ENCODE measurements at regions of chr2 and their contacts with region 1.

Region 1: GRCh38 chr2:241686649-241687425 is at the start of gene DTYMK:
- DNase-seq: peak; percentile 99
- H3K4me3 Mint-ChIP-seq: peak within 1 kb of the TSS; percentile 90
- H3K27ac Mint-ChIP-seq: peak within 1 kb of the TSS; percentile 98
- H3K4me1 Mint-ChIP-seq: peaks cover 21% of the 10 kb centered on the region
- H3K27me3 Mint-ChIP-seq: no peaks in the 10 kb centered on the region
- total RNA-seq, gene DTYMK: 110 and 111 TPM in 2 replicates

Region 2: GRCh38 chr2:239814116-239814860 is 1872.5 kb before region 1 on chr2:
- intact Hi-C with region 1: no loop called
- DNase-seq: no peak
- H3K4me3 Mint-ChIP-seq: no peak overlapping the region
- H3K27ac Mint-ChIP-seq: no peak overlapping the region
- H3K4me1 Mint-ChIP-seq: no peaks in the 10 kb centered on the region
- H3K27me3 Mint-ChIP-seq: no peaks in the 10 kb centered on the region

Region 3: DNA sequence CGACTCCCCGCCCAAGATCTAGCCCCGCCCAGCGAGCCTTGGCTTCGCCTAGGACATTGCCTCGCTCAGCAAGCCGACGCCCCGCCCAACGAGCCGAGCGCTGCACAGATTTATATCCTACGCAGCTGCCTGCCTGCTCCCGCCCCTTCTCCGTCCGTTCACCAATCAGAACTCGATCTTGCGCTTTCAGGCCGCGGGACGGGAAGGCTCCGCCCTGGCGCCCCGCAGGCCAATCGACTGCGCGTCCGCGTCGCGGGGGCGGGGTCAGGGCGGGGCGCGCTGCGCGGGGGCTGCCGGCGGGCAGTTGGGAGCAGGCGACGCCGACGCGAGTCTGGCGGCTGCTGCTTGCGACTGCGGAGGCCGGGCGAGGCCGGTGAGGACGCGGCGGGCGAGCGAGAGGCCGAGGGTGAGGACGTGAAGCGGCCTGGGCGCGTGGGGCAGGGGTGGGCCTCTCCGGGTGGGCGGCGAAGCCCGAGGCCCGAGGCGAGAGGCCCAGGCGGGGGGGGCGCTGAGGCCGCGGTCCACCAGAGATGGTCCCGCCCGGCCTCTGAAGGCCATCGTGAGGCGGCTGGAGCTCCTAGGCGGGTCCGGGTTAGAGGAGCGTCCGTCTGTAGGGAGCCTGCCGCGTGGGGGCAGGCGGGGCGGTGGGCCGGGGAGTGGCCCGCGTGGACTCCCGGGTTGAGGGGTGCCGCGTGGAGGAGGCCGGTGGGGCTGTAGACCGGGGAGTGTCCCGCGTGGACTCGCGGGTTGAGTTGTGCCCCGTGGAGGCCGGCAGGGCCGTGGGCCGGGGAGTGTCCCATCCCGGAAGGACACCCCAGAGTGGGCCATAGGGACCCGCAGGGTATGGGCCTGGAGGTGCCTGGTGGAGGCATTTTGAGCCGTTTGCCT is 330.6 kb before region 1 on chr2 and contains the start of gene FARP2:
- intact Hi-C with region 1: loop called (anchors 5 kb)
- DNase-seq: peak; percentile 98
- H3K4me3 Mint-ChIP-seq: peak within 1 kb of the TSS; percentile 79
- H3K27ac Mint-ChIP-seq: peak within 1 kb of the TSS; percentile 76
- H3K4me1 Mint-ChIP-seq: peaks cover 33% of the 10 kb centered on the region
- H3K27me3 Mint-ChIP-seq: no peaks in the 10 kb centered on the region
- total RNA-seq, gene FARP2: 36.5 and 43.1 TPM in 2 replicates

Region 4: GRCh38 chr2:241637000-241637791 is 49.6 kb before region 1 on chr2 and contains the starts of genes ATG4B and THAP4:
- intact Hi-C with region 1: loop called (anchors 1 kb)
- DNase-seq: peak; percentile 95
- H3K4me3 Mint-ChIP-seq: peak within 1 kb of the TSS; percentile 89
- H3K27ac Mint-ChIP-seq: peak within 1 kb of the TSS; percentile 93
- H3K4me1 Mint-ChIP-seq: peaks cover 41% of the 10 kb centered on the region
- H3K27me3 Mint-ChIP-seq: no peaks in the 10 kb centered on the region
- total RNA-seq, gene ATG4B: 109 and 115 TPM in 2 replicates
- total RNA-seq, gene THAP4: 62.0 and 63.9 TPM in 2 replicates

Region 5: DNA sequence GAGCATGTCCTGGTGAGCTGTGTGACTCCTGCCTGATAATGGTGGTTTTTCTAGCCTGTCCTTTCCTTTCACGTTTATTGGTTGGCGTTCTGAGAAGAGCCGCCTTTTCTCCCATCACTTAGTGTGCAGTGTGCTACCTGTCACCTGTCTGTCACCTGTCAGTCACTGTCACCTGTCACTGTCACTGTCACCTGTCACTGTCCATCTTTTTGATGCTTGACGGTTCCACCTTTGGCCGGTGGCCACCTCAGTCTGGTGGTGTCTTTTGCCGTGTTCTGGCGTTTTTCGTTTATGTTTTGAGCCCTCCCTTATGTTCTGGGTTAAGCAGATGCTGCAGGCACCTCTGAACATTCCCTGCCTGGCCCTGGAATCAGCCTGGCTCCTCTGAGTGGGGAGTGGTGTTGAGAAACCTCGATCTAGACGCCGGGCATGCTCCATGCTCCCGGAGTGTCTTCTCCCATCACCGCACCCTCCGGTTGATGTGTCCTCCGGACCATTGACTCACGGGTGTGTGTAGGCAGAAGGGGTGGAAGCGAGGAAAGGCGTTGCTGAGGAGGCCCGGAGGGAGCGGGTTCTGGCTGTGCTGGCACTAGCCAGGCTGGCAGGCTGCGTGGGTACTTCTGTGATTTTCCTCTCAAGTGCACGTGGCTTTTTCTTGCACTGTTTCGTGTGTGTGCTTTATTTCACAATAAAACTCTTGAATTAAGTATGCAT is 21.0 kb before region 1 on chr2:
- intact Hi-C with region 1: loop called (anchors 2 kb)
- DNase-seq: no peak
- H3K4me3 Mint-ChIP-seq: no peak overlapping the region
- H3K27ac Mint-ChIP-seq: peak overlapping the region; percentile 76
- H3K4me1 Mint-ChIP-seq: peaks cover 8% of the 10 kb centered on the region
- H3K27me3 Mint-ChIP-seq: no peaks in the 10 kb centered on the region

Region 6: GRCh38 chr2:241702132-241703031 is 15.5 kb after region 1 on chr2:
- intact Hi-C with region 1: loop called (anchors 1 kb)
- DNase-seq: peak; percentile 95
- H3K4me3 Mint-ChIP-seq: peak overlapping the region; percentile 91
- H3K27ac Mint-ChIP-seq: peak overlapping the region; percentile 79
- H3K4me1 Mint-ChIP-seq: peaks cover 15% of the 10 kb centered on the region
- H3K27me3 Mint-ChIP-seq: no peaks in the 10 kb centered on the region

Region 7: GRCh38 chr2:241734467-241735208 is 47.8 kb after region 1 on chr2 and contains the start of gene D2HGDH:
- intact Hi-C with region 1: loop called (anchors 1 kb)
- DNase-seq: peak; percentile 98
- H3K4me3 Mint-ChIP-seq: peak within 1 kb of the TSS; percentile 83
- H3K27ac Mint-ChIP-seq: peak within 1 kb of the TSS; percentile 65
- H3K4me1 Mint-ChIP-seq: peaks cover 42% of the 10 kb centered on the region
- H3K27me3 Mint-ChIP-seq: no peaks in the 10 kb centered on the region
- total RNA-seq, gene D2HGDH: 34.2 and 40.4 TPM in 2 replicates

Region 8: DNA sequence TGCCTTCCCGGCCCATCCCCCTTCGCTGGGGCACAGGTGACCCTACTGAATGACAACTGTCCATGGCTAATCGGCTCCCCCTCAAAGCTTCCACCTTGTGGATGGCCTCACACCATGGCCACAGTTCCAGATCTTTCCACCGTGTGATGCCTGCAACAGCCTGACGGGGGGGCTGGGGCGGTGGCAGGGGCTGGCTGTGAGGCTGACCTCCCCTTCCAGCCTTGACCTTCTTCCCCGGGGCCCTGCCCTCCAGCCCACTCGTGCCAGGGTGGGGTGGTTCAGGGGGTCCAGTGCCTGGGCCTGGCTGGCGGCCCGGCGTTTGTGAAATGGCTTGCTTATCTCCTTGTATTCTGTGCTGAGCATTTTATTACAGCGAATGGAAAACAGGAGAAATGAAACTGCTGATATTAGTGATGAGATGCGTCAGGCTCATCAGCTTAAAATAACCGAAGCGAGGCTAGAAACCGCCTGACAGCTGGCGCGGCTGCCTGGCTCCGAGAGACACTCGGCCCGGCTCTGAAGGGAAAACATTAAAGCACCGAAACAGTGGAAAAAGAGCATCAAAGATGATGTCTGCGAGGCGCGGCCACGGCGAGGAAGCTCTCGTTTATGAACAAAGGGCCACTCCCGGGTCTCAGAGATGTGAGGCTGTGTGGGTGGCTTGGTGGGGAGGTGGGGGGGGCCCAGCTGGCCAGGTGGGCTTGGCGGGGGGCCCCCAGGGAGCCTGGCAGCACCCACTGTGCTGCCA is 172.8 kb after region 1 on chr2:
- intact Hi-C with region 1: loop called (anchors 5 kb)
- DNase-seq: peak; percentile 86
- H3K4me3 Mint-ChIP-seq: peak overlapping the region; percentile 89
- H3K27ac Mint-ChIP-seq: peak overlapping the region; percentile 91
- H3K4me1 Mint-ChIP-seq: peaks cover 55% of the 10 kb centered on the region
- H3K27me3 Mint-ChIP-seq: peaks cover 5% of the 10 kb centered on the region

Measured in activated CD4-positive, alpha-beta T cell treated with anti-CD3 and anti-CD28 coated beads, Interleukin-2, amount 10 ng/mL, durations not matched to agents 24 days and 14 days (primary cell).